Posterior vena cava (tissue), 2 donors: ENCODE measurements at regions of chr2 and their contacts with region 1.

Region 1: DNA sequence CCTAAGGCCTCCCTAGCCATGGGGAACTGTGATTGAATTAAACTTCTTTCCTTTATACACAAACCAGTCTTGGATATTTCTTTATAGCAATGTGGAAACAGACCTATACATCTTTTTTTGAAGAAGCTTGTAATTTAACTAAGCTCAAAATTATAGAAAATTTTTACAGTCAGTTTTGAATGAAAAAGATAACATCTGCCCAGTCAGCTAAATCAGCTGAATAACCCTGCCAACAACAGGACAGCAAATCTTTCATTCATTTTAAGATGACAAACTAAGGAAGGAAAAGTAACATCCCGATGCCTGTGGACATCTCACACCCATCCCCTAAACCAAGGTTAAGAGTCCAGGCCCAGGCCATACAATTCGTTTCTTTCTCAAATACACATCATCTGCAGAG is 541.3 kb upstream of the SLC39A10 start:
- DNase-seq: no peak

Region 2: GRCh38 chr2:195151711-195152110 is 36.0 kb after region 1 on chr2:
- intact Hi-C with region 1: loop called in 1 of 2 experiments (anchors 2 kb)
- DNase-seq: no peak